Activated CD4-positive, alpha-beta memory T cell treated with anti-CD3 and anti-CD28 coated beads for 36 hours (primary cell): ENCODE measurements at regions of chr3 and their contacts with region 1.

Region 1: DNA sequence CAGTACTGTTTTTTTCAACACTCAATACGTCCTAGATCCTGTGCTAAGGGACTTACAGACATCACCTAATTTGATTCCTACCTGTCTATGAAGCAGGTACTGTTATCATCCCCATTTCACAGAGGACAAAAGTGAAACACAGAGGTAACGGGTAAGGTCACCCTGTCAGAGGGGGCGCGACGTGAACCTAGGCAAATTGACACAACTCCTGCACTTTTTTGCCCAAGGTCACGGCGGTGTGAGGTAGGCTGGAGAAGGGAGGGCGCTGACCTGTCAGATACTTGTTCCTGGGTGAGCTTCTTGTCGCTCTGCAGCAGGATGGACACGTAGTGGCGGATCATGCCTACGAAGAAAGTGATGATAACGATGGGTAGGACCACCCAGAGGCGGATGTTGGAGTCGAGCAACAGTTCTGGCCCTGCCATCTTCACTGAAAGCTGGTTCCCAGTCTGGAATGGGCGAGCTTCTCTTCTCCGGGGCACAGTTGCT is 360 bp downstream of the EMC3 start:
- DNase-seq: no peak
- H3K4me3 Mint-ChIP-seq: peak overlapping the region; percentile 89
- H3K27ac Mint-ChIP-seq: peak overlapping the region; percentile 98
- H3K4me1 Mint-ChIP-seq: peaks cover 31% of the 10 kb centered on the region
- H3K27me3 Mint-ChIP-seq: no peaks in the 10 kb centered on the region

Region 2: DNA sequence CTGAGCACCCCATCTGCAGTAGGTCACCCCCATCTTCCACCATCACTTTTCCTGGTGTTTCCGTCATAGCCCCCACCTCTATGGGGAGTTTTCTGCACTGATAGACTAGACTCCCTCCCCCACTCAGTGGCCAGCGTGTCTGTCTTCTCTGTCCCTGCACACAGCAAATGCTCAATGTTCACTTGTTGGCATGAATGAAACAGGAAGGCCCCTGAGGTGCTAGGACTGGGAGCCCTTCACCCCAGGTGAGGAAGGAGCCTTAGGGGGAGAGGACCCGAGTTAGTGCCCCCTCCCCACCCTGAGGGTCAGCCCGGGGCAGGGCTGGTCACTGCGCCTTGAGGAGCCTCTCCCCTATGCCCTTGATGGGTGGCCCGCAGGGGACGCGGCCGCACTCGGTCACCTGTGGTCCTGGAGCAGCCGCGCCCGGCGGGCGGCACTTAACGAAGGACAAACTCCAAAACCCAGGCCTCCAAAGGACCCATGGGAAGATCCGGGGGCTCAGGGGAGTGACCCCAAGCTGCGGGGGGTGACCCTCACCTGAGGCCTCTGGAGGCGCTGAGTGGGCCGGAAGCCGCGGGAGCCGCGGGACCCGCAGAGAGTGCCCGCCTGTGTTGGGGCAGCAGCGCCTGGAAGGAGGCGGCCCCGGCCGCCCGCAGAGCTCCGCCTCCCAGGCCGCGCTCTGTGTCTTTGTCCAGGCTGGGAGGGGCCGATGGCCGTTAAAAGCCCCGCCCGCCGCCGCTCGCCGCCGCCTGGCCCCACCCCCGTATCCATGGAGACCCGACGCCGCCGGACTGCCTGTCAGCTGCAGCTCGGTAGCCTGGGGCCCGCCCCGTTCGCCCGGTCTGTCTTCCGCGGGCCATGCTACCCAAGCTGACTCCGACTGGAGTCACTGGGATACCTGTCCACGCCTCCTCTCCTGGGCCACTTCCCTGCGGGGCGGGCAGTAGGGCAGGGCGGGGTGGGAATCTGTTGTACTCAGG is 24.5 kb after region 1 on chr3:
- CTCF ChIA-PET with region 1: interaction called, 3 read pairs
- POLR2A ChIA-PET with region 1: interaction called, 7 read pairs
- intact Hi-C with region 1: loop called (anchors 2 kb)
- DNase-seq: peak; percentile 93
- H3K4me3 Mint-ChIP-seq: peak overlapping the region; percentile 29
- H3K27ac Mint-ChIP-seq: no peak overlapping the region
- H3K4me1 Mint-ChIP-seq: peaks cover 19% of the 10 kb centered on the region
- H3K27me3 Mint-ChIP-seq: peaks cover 2% of the 10 kb centered on the region

Region 3: GRCh38 chr3:10273702-10274305 is 287.5 kb after region 1 on chr3:
- CTCF ChIA-PET with region 1: no interaction called
- POLR2A ChIA-PET with region 1: no interaction called
- intact Hi-C with region 1: no loop called
- DNase-seq: no peak
- H3K4me3 Mint-ChIP-seq: no peak overlapping the region
- H3K27ac Mint-ChIP-seq: no peak overlapping the region
- H3K4me1 Mint-ChIP-seq: peaks cover 53% of the 10 kb centered on the region
- H3K27me3 Mint-ChIP-seq: no peaks in the 10 kb centered on the region

Region 4: DNA sequence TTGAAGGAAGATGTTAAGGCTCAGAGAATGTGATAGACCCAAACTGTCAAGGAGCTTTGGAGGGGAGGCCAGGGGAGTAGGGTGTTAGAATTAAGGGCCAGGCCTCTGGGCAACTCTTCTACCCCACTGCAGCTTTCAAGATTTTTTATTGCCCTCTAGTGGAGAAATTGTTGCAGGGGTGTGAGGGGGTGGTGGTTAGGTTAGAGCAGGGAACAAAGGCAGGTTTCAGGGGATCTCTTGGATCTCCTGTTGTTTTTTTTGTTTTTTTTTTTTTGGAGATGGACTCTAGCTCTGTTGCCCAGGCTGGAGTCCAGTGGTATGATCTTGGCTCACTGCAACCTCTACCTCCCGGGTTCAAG is 336.1 kb after region 1 on chr3:
- CTCF ChIA-PET with region 1: interaction called, 3 read pairs
- POLR2A ChIA-PET with region 1: no interaction called
- intact Hi-C with region 1: loop called (anchors 2 kb)
- DNase-seq: peak; percentile 28
- H3K4me3 Mint-ChIP-seq: no peak overlapping the region
- H3K27ac Mint-ChIP-seq: no peak overlapping the region
- H3K4me1 Mint-ChIP-seq: peaks cover 22% of the 10 kb centered on the region
- H3K27me3 Mint-ChIP-seq: peaks cover 4% of the 10 kb centered on the region